ENCODE measurements at regions of chr18 and their contacts with region 1.

Region 1: GRCh38 chr18:623761-624620 is 27.2 kb downstream of the CLUL1 start:
- ATAC-seq: peak in 7 of 8 experiments; percentile 11 to 88 (median 60)
- H3K4me3 ChIP-seq: no peak overlapping the region
- H3K27ac ChIP-seq: no peak overlapping the region
- H3K4me1 ChIP-seq: no peaks in the 10 kb centered on the region

Region 2: GRCh38 chr18:519019-519879 is 104.7 kb before region 1 on chr18:
- in situ Hi-C with region 1: loop called in 1 of 9 experiments (anchors 25 kb)
- ATAC-seq: peak in 5 of 8 experiments; percentile 77 to 94 (median 93)
- H3K4me3 ChIP-seq: no peak overlapping the region
- H3K27ac ChIP-seq: no peak overlapping the region
- H3K4me1 ChIP-seq: peaks cover 0 to 5% of the 10 kb centered on the region in 2 donors

Region 3: DNA sequence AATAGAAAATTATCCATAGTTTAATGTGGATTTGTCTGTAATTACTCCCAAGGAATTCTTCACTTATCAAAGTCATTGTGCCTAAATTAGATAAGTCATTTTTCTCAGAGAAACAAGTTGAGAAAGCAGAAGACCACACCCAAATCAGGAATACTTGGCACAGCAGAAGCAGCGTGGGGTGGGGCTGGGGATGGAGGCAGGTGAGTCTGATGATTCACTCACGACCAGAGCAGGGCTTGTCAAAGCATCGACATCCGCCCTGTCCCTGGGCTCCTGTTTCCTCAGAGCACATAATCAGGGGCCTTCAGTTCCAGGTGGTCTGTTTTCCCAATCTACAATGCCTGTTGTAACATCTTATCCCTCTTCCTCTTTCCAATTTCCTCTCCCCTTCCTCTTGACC is 92.0 kb before region 1 on chr18:
- in situ Hi-C with region 1: no loop called
- ATAC-seq: peak in 1 of 8 experiments; percentile 40
- H3K4me3 ChIP-seq: no peak overlapping the region
- H3K27ac ChIP-seq: no peak overlapping the region
- H3K4me1 ChIP-seq: no peaks in the 10 kb centered on the region

Region 4: GRCh38 chr18:812376-813171 is 188.6 kb after region 1 on chr18:
- in situ Hi-C with region 1: loop called in 2 of 9 experiments (anchors 25 kb)
- ATAC-seq: peak; percentile 78 to 94 (median 92)
- H3K4me3 ChIP-seq: peak overlapping the region; percentile 55 to 96 (median 88)
- H3K27ac ChIP-seq: peak overlapping the region; percentile 73 to 94
- H3K4me1 ChIP-seq: peaks cover 2 to 19% of the 10 kb centered on the region in 2 donors

Region 5: GRCh38 chr18:839224-840022 is 215.4 kb after region 1 on chr18:
- in situ Hi-C with region 1: loop called in 4 of 9 experiments (anchors 10 to 25 kb)
- ATAC-seq: peak; percentile 91 to 99 (median 96)
- H3K4me3 ChIP-seq: no peak overlapping the region
- H3K27ac ChIP-seq: no peak overlapping the region
- H3K4me1 ChIP-seq: no peaks in the 10 kb centered on the region

Region 6: GRCh38 chr18:1173593-1173992 is 549.6 kb after region 1 on chr18:
- in situ Hi-C with region 1: no loop called
- ATAC-seq: no peak
- H3K4me3 ChIP-seq: no peak overlapping the region
- H3K27ac ChIP-seq: no peak overlapping the region
- H3K4me1 ChIP-seq: no peaks in the 10 kb centered on the region